Activated CD8-positive, alpha-beta T cell treated with anti-CD3 and anti-CD28 coated beads, Interleukin-2, amount 10 ng/mL, durations not matched to agents 7 days and 5 days (primary cell): ENCODE measurements at regions of chr19 and their contacts with region 1.

Region 1: GRCh38 chr19:40090241-40091204 is at the start of gene ZNF780A:
- DNase-seq: peak; percentile 84
- ATAC-seq: peak; percentile 93
- H3K4me3 Mint-ChIP-seq: peak within 1 kb of the TSS; percentile 100
- H3K27ac Mint-ChIP-seq: peak within 1 kb of the TSS; percentile 100
- H3K4me1 Mint-ChIP-seq: peaks cover 35% of the 10 kb centered on the region
- H3K27me3 Mint-ChIP-seq: peaks cover 11% of the 10 kb centered on the region
- total RNA-seq, gene ZNF780A: 17.9 to 21.6 TPM

Region 2: DNA sequence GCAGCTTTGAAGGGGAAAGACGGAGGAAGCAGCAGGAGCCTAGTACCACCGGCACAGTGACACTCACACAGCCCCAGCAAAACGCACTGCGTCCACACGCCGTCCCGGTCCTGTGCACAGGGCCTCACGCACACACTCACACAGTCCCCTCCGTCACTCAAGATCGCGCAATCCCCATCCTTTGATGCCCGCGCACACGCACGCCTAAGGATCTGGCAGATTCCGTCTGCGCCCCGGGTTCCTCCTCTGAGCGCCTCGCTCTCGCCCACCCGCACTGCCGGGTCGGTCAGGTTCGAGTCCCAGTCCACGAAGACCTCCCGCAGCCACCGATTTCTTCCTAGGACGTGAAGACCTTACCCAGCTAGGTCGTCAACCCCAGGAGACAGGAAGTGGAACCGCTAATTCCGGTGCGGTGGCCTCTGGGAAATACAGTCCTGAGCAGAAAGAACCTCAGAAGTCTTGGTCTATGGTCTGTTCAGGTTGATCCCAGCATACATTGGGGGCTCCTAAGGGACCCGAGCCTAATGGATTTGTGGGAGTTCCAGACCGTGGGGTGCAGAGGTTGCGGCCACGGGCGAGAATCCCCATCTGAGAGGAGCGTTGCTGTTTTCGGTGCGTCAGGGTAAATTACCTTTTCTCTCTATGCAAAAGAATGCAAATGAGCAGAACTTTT is 34.6 kb before region 1 on chr19 and contains the start of gene ZNF780B:
- CTCF ChIA-PET with region 1: interaction called, 3 read pairs
- POLR2A ChIA-PET with region 1: interaction called, 12 read pairs
- DNase-seq: peak; percentile 85
- ATAC-seq: peak; percentile 95
- H3K4me3 Mint-ChIP-seq: peak within 1 kb of the TSS; percentile 98
- H3K27ac Mint-ChIP-seq: peak within 1 kb of the TSS; percentile 99
- H3K4me1 Mint-ChIP-seq: peaks cover 38% of the 10 kb centered on the region
- H3K27me3 Mint-ChIP-seq: peaks cover 5% of the 10 kb centered on the region
- total RNA-seq, gene ZNF780B: 27.4 to 30.3 TPM